ENCODE measurements at regions of chr11 and their contacts with region 1.

Region 1: GRCh38 chr11:114400217-114400914 is at the starts of genes C11orf71 and RBM7:
- DNase-seq: peak; percentile 94 to 97 (median 95)
- ATAC-seq: peak; percentile 96
- H3K4me3 ChIP-seq: peak within 1 kb of the TSS; percentile 93
- H3K4me3 Mint-ChIP-seq: peak within 1 kb of the TSS; percentile 89 to 99 (median 97)
- H3K27ac ChIP-seq: peak within 1 kb of the TSS; percentile 96
- H3K27ac Mint-ChIP-seq: peak within 1 kb of the TSS; percentile 96 to 100 (median 99)
- H3K4me1 ChIP-seq: peaks cover 25% of the 10 kb centered on the region in 2 donors
- H3K4me1 Mint-ChIP-seq: peaks cover 33 to 77% (median 68%) of the 10 kb centered on the region in 7 donors
- H3K27me3 ChIP-seq: no peaks in the 10 kb centered on the region
- H3K27me3 Mint-ChIP-seq: no peaks in the 10 kb centered on the region
- total RNA-seq, gene C11orf71: 6.0 to 19.1 (median 17.1) TPM
- total RNA-seq, gene RBM7: 35.8 to 71.3 (median 43.4) TPM

Region 2: DNA sequence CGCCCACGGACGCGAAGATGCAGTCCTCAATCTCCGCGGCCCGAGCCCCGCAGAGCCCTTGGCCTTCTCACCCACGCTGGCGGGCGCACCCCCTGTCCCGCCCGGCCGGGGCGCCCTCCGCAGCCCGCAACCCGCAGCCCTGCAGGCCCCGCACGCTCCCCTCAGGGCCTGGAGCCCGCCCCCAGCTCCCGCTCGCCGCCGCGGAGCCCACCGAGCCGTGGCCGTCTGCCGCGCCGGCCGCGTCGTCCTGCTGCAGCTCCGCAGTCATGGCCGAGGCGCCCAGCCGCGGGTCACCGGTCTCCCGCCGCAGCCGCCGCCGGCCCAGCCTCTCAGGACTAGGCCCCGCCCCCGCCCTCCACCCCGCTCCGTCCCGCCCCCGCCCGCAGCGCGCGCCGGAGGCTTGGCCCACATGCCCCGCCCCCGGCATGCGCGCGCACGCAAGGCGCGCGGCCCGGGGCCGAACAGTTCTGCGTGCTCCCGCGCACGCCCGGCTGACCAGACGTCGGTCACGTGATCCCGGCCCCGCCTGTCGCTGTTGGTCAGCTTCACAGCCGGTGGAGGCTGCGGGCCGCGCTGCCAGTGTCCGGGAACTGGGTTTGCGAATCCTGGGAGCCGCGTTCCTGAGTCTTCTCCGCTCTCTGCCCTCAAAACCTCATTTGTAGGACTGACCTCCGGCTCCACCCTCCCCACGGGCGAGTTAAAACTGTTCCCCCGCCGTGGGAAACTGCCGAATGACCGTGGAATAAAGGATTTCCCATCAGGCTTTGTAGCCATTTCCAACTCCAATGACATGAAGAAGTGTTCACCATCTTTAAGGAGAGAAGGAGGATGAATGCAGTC is 524.9 kb before region 1 on chr11 and contains the start of gene USP28:
- CTCF ChIA-PET with region 1: no interaction called
- POLR2A ChIA-PET with region 1: no interaction called
- intact Hi-C with region 1: loop called (anchors 1 to 2 kb)
- DNase-seq: peak; percentile 49 to 92 (median 73)
- ATAC-seq: peak; percentile 97
- H3K4me3 ChIP-seq: peak within 1 kb of the TSS; percentile 79
- H3K4me3 Mint-ChIP-seq: peak within 1 kb of the TSS; percentile 88 to 100 (median 98)
- H3K27ac ChIP-seq: peak within 1 kb of the TSS; percentile 78
- H3K27ac Mint-ChIP-seq: peak within 1 kb of the TSS; percentile 91 to 99 (median 98)
- H3K4me1 ChIP-seq: no peaks in the 10 kb centered on the region
- H3K4me1 Mint-ChIP-seq: peaks cover 34 to 59% (median 54%) of the 10 kb centered on the region in 7 donors
- H3K27me3 ChIP-seq: no peaks in the 10 kb centered on the region
- H3K27me3 Mint-ChIP-seq: no peaks in the 10 kb centered on the region
- total RNA-seq, gene USP28: 12.0 to 50.3 (median 19.0) TPM

Region 3: GRCh38 chr11:114317787-114318137 is 82.6 kb before region 1 on chr11:
- CTCF ChIA-PET with region 1: no interaction called
- POLR2A ChIA-PET with region 1: interaction called, 6 read pairs
- intact Hi-C with region 1: loop called in 1 of 2 experiments (anchors 2 kb)
- DNase-seq: no peak
- ATAC-seq: no peak
- H3K4me3 ChIP-seq: no peak overlapping the region
- H3K4me3 Mint-ChIP-seq: peak overlapping the region in 6 of 10 donors; percentile 28 to 79 (median 57)
- H3K27ac ChIP-seq: peak overlapping the region; percentile 66
- H3K27ac Mint-ChIP-seq: peak overlapping the region in 8 of 9 donors; percentile 73 to 98 (median 92)
- H3K4me1 ChIP-seq: peaks cover 0 to 50% of the 10 kb centered on the region in 2 donors
- H3K4me1 Mint-ChIP-seq: peaks cover 16 to 73% (median 56%) of the 10 kb centered on the region in 7 donors
- H3K27me3 ChIP-seq: no peaks in the 10 kb centered on the region
- H3K27me3 Mint-ChIP-seq: peaks cover 0 to 3% (median 0%) of the 10 kb centered on the region in 5 donors

Region 4: GRCh38 chr11:114348200-114349191 is 51.9 kb before region 1 on chr11:
- CTCF ChIA-PET with region 1: no interaction called
- POLR2A ChIA-PET with region 1: no interaction called
- intact Hi-C with region 1: loop called (anchors 2 kb)
- DNase-seq: peak in 7 of 9 donors; percentile 14 to 55 (median 35)
- ATAC-seq: peak; percentile 46
- H3K4me3 ChIP-seq: no peak overlapping the region
- H3K4me3 Mint-ChIP-seq: no peak overlapping the region
- H3K27ac ChIP-seq: no peak overlapping the region
- H3K27ac Mint-ChIP-seq: no peak overlapping the region
- H3K4me1 ChIP-seq: peaks cover 0 to 3% of the 10 kb centered on the region in 2 donors
- H3K4me1 Mint-ChIP-seq: peaks cover 0 to 13% (median 9%) of the 10 kb centered on the region in 7 donors
- H3K27me3 ChIP-seq: no peaks in the 10 kb centered on the region
- H3K27me3 Mint-ChIP-seq: no peaks in the 10 kb centered on the region

Region 5: DNA sequence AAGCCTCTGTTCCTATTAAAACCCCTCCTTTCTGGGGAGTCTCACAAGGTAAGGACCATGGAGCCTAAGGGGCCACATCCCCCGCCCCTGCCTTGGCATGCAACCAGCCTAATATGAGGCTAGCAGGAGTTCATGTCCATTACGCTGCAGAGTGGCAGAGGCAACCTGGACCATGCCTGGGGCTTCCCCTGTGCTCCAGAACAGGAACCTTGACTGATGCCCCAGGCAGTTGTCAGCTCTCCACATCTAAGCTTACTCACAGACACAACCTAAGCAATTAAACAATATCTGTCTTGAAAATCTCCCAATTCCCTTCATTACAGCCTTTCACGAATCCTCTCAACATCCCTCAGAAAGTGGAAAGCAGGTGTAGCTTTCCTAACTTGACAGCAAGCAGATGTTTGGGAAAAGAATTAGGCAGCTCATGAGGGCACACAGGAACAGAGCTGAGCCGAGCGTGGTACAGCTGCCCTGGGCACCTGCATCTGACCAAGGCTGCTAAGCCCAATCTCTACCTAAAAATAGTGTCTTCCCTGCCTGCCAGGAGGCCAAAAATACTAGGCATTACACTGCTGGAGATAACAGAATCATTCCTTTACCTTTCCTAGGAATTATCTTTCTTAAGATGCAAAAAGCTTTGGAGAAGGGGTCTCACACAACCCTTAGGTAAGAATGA is 20.8 kb before region 1 on chr11:
- CTCF ChIA-PET with region 1: interaction called, 3 read pairs
- POLR2A ChIA-PET with region 1: interaction called, 6 read pairs
- intact Hi-C with region 1: loop called in 1 of 2 experiments (anchors 1 kb)
- DNase-seq: no peak
- ATAC-seq: no peak
- H3K4me3 ChIP-seq: no peak overlapping the region
- H3K4me3 Mint-ChIP-seq: no peak overlapping the region
- H3K27ac ChIP-seq: no peak overlapping the region
- H3K27ac Mint-ChIP-seq: peak overlapping the region in 5 of 9 donors; percentile 11 to 94 (median 84)
- H3K4me1 ChIP-seq: peaks cover 0 to 8% of the 10 kb centered on the region in 2 donors
- H3K4me1 Mint-ChIP-seq: peaks cover 5 to 30% (median 16%) of the 10 kb centered on the region in 7 donors
- H3K27me3 ChIP-seq: no peaks in the 10 kb centered on the region
- H3K27me3 Mint-ChIP-seq: peaks cover 0 to 19% (median 4%) of the 10 kb centered on the region in 5 donors

Region 6: DNA sequence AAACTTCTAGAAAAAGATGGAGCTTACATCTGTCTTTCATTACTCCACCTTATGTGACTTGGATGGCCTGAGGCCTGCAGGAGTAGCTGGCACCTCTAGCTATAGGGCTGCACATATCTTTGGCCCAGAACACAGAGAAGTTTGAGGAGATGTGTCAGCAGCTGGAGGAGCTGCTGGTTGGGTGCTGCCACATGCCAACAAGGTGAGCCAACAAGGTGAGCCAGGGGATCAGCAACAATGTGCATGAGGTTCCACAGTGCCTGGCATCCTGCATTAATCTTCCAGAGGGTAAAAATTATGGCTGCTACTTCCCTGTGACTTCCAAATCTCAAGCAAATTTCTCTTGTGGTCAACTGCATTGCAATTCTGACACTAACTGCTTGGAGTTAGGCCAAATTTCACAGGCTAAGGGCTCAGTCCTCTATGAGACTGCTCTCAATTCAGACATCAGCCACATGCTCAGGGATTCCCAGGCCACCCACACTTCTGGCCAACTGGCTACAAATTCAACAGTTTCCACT is 16.1 kb after region 1 on chr11:
- CTCF ChIA-PET with region 1: no interaction called
- POLR2A ChIA-PET with region 1: interaction called, 3 read pairs
- intact Hi-C with region 1: loop called in 1 of 2 experiments (anchors 2 kb)
- DNase-seq: no peak
- ATAC-seq: no peak
- H3K4me3 ChIP-seq: no peak overlapping the region
- H3K4me3 Mint-ChIP-seq: no peak overlapping the region
- H3K27ac ChIP-seq: no peak overlapping the region
- H3K27ac Mint-ChIP-seq: no peak overlapping the region
- H3K4me1 ChIP-seq: no peaks in the 10 kb centered on the region
- H3K4me1 Mint-ChIP-seq: peaks cover 0 to 7% (median 5%) of the 10 kb centered on the region in 7 donors
- H3K27me3 ChIP-seq: no peaks in the 10 kb centered on the region
- H3K27me3 Mint-ChIP-seq: no peaks in the 10 kb centered on the region

Region 7: GRCh38 chr11:114439229-114440120 is 39.1 kb after region 1 on chr11 and contains the start of gene REXO2:
- CTCF ChIA-PET with region 1: interaction called, 4 read pairs
- POLR2A ChIA-PET with region 1: interaction called, 7 read pairs
- intact Hi-C with region 1: loop called (anchors 1 kb)
- DNase-seq: peak; percentile 89 to 94 (median 92)
- ATAC-seq: peak; percentile 100
- H3K4me3 ChIP-seq: peak within 1 kb of the TSS; percentile 96
- H3K4me3 Mint-ChIP-seq: peak within 1 kb of the TSS; percentile 92 to 98 (median 96)
- H3K27ac ChIP-seq: peak within 1 kb of the TSS; percentile 79
- H3K27ac Mint-ChIP-seq: peak within 1 kb of the TSS; percentile 84 to 95 (median 93)
- H3K4me1 ChIP-seq: peaks cover 18 to 20% of the 10 kb centered on the region in 2 donors
- H3K4me1 Mint-ChIP-seq: peaks cover 22 to 56% (median 36%) of the 10 kb centered on the region in 7 donors
- H3K27me3 ChIP-seq: no peaks in the 10 kb centered on the region
- H3K27me3 Mint-ChIP-seq: peaks cover 0 to 4% (median 0%) of the 10 kb centered on the region in 5 donors
- total RNA-seq, gene REXO2: 33.8 to 105 (median 56.0) TPM

Region 8: GRCh38 chr11:114522818-114523217 is 122.5 kb after region 1 on chr11:
- CTCF ChIA-PET with region 1: no interaction called
- POLR2A ChIA-PET with region 1: no interaction called
- intact Hi-C with region 1: no loop called
- DNase-seq: no peak
- ATAC-seq: no peak
- H3K4me3 ChIP-seq: no peak overlapping the region
- H3K4me3 Mint-ChIP-seq: no peak overlapping the region
- H3K27ac ChIP-seq: no peak overlapping the region
- H3K27ac Mint-ChIP-seq: no peak overlapping the region
- H3K4me1 ChIP-seq: no peaks in the 10 kb centered on the region
- H3K4me1 Mint-ChIP-seq: no peaks in the 10 kb centered on the region
- H3K27me3 ChIP-seq: no peaks in the 10 kb centered on the region
- H3K27me3 Mint-ChIP-seq: peaks cover 0 to 17% (median 7%) of the 10 kb centered on the region in 5 donors